CD8-positive, alpha-beta memory T cell (primary cell): ENCODE measurements at regions of chr7 and their contacts with region 1.

Region 1: DNA sequence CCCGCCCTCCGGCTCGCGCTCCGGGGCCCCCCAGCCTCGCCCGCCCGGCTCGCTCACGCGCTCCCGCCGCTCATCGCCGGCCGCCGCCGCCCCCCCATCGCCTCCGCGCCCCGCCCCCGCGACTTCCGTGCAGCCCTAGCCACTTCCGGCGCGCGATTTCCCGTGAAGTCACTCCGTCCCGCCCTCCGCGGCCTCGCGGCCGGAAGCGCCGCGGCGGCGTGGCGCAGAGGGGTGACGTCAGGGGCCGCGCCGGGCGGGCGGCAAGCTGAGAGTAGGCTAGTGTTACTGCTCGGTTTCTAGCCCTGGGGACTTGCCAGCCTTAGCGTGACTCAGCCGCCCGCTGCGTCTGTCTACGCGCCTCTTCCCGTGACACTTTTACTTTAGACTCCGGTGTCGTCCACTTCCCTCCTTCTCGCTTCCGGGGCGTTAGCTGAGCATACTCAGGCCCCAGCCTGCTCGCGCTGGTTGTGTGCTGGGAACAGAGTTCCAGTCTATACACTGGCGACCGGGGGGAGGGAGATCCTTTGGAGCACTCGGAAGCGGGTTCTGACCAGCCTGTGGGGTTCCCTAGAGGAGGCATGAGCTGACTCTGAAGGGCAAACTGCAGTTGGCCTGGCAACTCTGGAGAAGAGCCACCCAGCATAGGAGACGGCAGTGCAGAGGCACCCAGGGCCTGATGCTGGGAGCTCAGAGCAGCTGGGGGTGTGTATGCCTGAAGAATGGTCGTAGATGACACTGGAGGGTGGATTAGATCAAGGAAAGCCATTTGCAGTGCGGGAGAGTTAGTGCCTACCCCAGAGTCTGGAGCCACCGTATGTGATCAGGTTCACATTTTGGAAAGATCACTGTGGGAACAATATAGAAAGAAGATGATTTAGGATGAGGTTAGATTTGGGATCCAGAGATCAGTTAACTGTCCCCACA is at the start of gene PURB:
- DNase-seq: peak; percentile 96 to 99 (median 98)
- H3K4me3 ChIP-seq: peak within 1 kb of the TSS; percentile 98
- H3K4me3 Mint-ChIP-seq: peak within 1 kb of the TSS; percentile 85 to 98 (median 95)
- H3K27ac ChIP-seq: peak within 1 kb of the TSS; percentile 96
- H3K27ac Mint-ChIP-seq: peak within 1 kb of the TSS; percentile 97 to 100 (median 100)
- H3K4me1 ChIP-seq: peaks cover 43% of the 10 kb centered on the region
- H3K4me1 Mint-ChIP-seq: peaks cover 48 to 71% (median 68%) of the 10 kb centered on the region in 3 donors
- H3K27me3 ChIP-seq: no peaks in the 10 kb centered on the region
- H3K27me3 Mint-ChIP-seq: peaks cover 0 to 7% of the 10 kb centered on the region in 2 donors
- total RNA-seq, gene PURB: 45.0 to 45.1 TPM

Region 2: DNA sequence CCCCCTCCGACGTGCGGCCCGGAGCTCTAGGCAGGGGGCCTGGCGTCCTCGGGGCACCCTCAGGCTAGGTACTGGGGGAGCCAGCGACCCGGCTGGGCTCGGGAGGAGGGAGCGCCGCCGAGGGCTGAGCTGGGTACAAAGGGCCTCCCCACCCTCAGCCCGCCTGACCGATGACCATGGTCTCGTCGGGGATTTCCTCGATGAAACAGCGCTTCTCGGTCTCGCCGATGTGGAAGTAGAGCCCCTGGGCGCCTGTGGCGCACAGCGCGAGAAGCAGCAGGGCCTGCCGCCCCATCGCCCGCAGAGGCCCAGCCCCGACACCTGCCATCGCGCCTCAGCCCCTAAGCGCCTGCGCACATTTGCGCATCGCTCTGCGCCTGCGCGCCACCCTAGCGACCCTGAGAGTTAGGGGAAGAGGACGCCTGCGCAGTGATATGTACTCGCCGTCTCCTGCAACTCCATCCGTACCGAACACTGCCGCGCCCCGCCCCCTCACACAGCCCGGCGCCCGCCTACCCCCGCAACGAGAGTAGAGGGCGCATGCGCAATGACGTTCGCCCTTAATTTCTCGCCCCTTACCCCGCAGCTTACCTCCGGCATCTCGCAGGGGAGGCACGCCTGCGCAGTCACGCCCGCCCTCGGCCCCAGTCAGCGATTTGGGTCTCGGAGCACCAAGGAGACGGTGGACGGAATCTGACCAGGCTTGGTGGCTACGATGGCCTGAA is 303.6 kb before region 1 on chr7 and contains the start of gene TMED4:
- CTCF ChIA-PET with region 1: interaction called, 3 read pairs
- POLR2A ChIA-PET with region 1: interaction called, 16 read pairs
- DNase-seq: peak; percentile 100
- H3K4me3 ChIP-seq: peak within 1 kb of the TSS; percentile 96
- H3K4me3 Mint-ChIP-seq: peak within 1 kb of the TSS; percentile 86 to 96 (median 90)
- H3K27ac ChIP-seq: peak within 1 kb of the TSS; percentile 99
- H3K27ac Mint-ChIP-seq: peak within 1 kb of the TSS; percentile 96 to 98 (median 97)
- H3K4me1 ChIP-seq: peaks cover 21% of the 10 kb centered on the region
- H3K4me1 Mint-ChIP-seq: peaks cover 19 to 49% (median 35%) of the 10 kb centered on the region in 3 donors
- H3K27me3 ChIP-seq: no peaks in the 10 kb centered on the region
- H3K27me3 Mint-ChIP-seq: peaks cover 0 to 3% of the 10 kb centered on the region in 2 donors
- total RNA-seq, gene TMED4: 78.8 to 80.5 TPM

Region 3: DNA sequence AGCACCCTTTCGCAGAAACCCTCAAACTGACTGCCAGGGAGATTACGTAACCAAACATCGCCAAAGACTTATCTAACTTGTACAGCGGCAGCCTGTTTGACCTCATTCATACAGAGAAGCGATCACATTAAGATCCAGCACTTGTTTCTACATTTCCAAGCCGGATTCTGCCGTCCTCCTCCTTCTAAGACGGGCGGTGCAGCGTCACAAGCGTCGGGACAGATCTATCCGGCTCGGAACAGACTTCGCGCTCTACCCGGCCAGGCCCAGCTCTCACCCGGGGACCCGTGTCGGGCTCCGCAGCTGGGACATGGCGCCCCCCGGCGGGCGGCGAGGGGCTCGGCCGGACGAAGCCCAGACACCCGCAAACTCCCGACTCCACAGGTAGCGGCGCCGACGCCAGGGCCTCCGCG is 38.1 kb before region 1 on chr7:
- CTCF ChIA-PET with region 1: interaction called, 10 read pairs
- POLR2A ChIA-PET with region 1: interaction called, 34 read pairs
- DNase-seq: peak; percentile 74 to 93 (median 91)
- H3K4me3 ChIP-seq: peak overlapping the region; percentile 86
- H3K4me3 Mint-ChIP-seq: peak overlapping the region; percentile 89 to 97 (median 96)
- H3K27ac ChIP-seq: peak overlapping the region; percentile 97
- H3K27ac Mint-ChIP-seq: peak overlapping the region; percentile 97 to 100 (median 99)
- H3K4me1 ChIP-seq: peaks cover 31% of the 10 kb centered on the region
- H3K4me1 Mint-ChIP-seq: peaks cover 35 to 38% (median 37%) of the 10 kb centered on the region in 3 donors
- H3K27me3 ChIP-seq: no peaks in the 10 kb centered on the region
- H3K27me3 Mint-ChIP-seq: peaks cover 0 to 11% of the 10 kb centered on the region in 2 donors

Region 4: DNA sequence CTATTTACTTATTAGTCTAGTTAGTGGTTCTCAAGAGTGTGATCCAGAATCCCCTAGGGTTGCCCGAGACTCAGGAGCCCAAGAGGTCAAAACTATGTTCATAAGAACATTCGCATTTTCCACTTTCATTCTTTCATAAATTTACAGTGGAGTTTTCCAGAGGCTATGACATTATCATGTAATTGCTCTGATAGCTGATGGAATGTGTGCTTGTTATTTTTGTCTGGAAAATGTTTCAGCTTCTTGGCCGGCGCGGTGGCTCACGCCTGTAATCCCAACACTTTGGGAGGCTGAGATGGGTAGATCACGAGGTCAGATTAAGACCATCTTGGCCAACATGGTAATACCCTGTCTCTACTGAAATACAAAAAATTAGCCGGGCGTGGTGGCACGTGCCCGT is 10.4 kb before region 1 on chr7:
- CTCF ChIA-PET with region 1: interaction called, 3 read pairs
- POLR2A ChIA-PET with region 1: interaction called, 10 read pairs
- DNase-seq: no peak
- H3K4me3 ChIP-seq: no peak overlapping the region
- H3K4me3 Mint-ChIP-seq: no peak overlapping the region
- H3K27ac ChIP-seq: no peak overlapping the region
- H3K27ac Mint-ChIP-seq: peak overlapping the region in 2 of 8 donors; percentile 56 to 61
- H3K4me1 ChIP-seq: peaks cover 3% of the 10 kb centered on the region
- H3K4me1 Mint-ChIP-seq: peaks cover 12 to 35% (median 29%) of the 10 kb centered on the region in 3 donors
- H3K27me3 ChIP-seq: no peaks in the 10 kb centered on the region
- H3K27me3 Mint-ChIP-seq: no peaks in the 10 kb centered on the region

Region 5: GRCh38 chr7:45111298-45112223 is 225.9 kb after region 1 on chr7 and contains the start of gene TBRG4:
- CTCF ChIA-PET with region 1: interaction called, 3 read pairs
- POLR2A ChIA-PET with region 1: interaction called, 11 read pairs
- DNase-seq: peak; percentile 89 to 95 (median 92)
- H3K4me3 ChIP-seq: peak within 1 kb of the TSS; percentile 87
- H3K4me3 Mint-ChIP-seq: peak within 1 kb of the TSS; percentile 93 to 98 (median 95)
- H3K27ac ChIP-seq: peak within 1 kb of the TSS; percentile 95
- H3K27ac Mint-ChIP-seq: peak within 1 kb of the TSS; percentile 95 to 100 (median 98)
- H3K4me1 ChIP-seq: peaks cover 52% of the 10 kb centered on the region
- H3K4me1 Mint-ChIP-seq: peaks cover 44 to 56% (median 48%) of the 10 kb centered on the region in 3 donors
- H3K27me3 ChIP-seq: no peaks in the 10 kb centered on the region
- H3K27me3 Mint-ChIP-seq: peaks cover 6 to 8% of the 10 kb centered on the region in 2 donors
- total RNA-seq, gene TBRG4: 198 to 203 TPM